Activated T-helper 2 cell treated with anti-CD3 and anti-CD28 coated beads, Interferon-gamma antibody, Interleukin-2, Interleukin-4, amounts not matched to agents 10 μg/mL and 5 μg/mL and 100 μg/mL, durations not matched to agents 14 hours and 24 hours and 36 hours (primary cell): ENCODE measurements at regions of chr3 and their contacts with region 1.

Region 1: DNA sequence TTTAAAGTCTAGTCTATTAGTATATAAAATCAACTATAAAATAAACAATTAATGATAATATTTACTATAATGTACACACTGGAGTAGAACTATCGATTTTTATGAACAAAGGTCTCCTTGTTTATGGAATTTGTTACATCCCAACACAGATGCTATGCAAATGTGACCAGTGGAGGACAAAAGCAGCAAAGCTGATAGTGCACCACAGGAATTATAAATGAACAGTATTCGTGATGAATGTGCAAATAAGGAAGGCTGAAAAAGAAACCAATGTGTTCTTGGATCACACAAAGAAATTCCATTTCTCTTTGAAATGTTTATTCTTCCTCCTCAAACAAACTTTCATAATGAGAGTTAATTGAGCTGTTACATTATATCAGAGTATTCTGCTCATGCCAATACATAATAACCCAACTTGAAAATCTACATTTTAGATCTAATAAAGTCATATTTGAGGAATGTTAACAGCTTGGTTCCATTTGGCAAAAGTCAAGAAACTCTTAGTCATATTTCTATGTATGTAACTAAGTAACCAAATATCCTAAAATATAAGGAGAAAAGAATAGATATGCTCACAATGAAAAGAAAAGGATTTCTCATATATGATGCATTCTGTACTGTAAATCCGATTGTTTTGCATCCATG is 79.3 kb downstream of the NEK10 start:
- DNase-seq: no peak
- H3K4me3 Mint-ChIP-seq: no peak overlapping the region
- H3K27ac Mint-ChIP-seq: no peak overlapping the region
- H3K4me1 Mint-ChIP-seq: no peaks in the 10 kb centered on the region
- H3K27me3 Mint-ChIP-seq: peaks cover 1% of the 10 kb centered on the region

Region 2: GRCh38 chr3:27228805-27229204 is 61.1 kb before region 1 on chr3:
- intact Hi-C with region 1: loop called (anchors 10 kb)
- DNase-seq: no peak
- H3K4me3 Mint-ChIP-seq: no peak overlapping the region
- H3K27ac Mint-ChIP-seq: no peak overlapping the region
- H3K4me1 Mint-ChIP-seq: no peaks in the 10 kb centered on the region
- H3K27me3 Mint-ChIP-seq: no peaks in the 10 kb centered on the region

Region 3: GRCh38 chr3:27632431-27633223 is 342.7 kb after region 1 on chr3:
- intact Hi-C with region 1: no loop called
- DNase-seq: peak; percentile 34
- H3K4me3 Mint-ChIP-seq: peak overlapping the region; percentile 93
- H3K27ac Mint-ChIP-seq: peak overlapping the region; percentile 90
- H3K4me1 Mint-ChIP-seq: peaks cover 44% of the 10 kb centered on the region
- H3K27me3 Mint-ChIP-seq: no peaks in the 10 kb centered on the region